Thyroid gland (tissue), 4 donors: ENCODE measurements at regions of chr19 and their contacts with region 1.

Region 1: DNA sequence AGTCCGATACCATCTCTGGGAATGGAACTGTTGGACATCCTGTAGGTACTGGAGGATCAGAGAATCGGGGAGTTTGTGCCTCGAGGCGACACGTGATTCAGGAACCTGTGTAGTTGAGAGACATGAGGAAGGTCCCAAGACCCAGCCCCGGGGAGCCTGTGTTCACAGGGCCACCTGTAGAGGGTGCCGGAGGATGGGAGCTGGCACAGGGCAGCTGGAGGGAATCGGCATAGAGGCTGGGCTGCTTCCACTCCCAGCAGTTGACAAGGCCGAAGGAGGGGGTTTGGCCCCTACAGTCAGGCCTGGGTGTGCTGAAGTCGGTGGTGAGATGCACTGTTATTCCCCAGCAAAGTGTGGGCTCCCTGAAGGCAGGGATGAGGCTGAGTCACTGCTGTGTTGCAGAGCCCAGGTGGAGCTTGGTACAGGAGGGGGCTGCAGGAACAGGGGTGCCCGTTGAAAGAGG is 2.5 kb upstream of the ISYNA1 start:
- DNase-seq: peak in 1 of 2 donors; percentile 11
- H3K4me3 ChIP-seq: no peak overlapping the region
- H3K27ac ChIP-seq: no peak overlapping the region
- H3K4me1 ChIP-seq: peaks cover 14 to 16% of the 10 kb centered on the region in 2 donors
- H3K27me3 ChIP-seq: no peaks in the 10 kb centered on the region
- CTCF ChIP-seq: peak in 1 of 6 experiments; percentile 8
- POLR2A ChIP-seq: no peak

Region 2: GRCh38 chr19:18167975-18168645 is 272.3 kb before region 1 on chr19:
- intact Hi-C with region 1: no loop called
- DNase-seq: peak; percentile 36 to 37
- H3K4me3 ChIP-seq: no peak overlapping the region
- H3K27ac ChIP-seq: no peak overlapping the region
- H3K4me1 ChIP-seq: peaks cover 0 to 1% of the 10 kb centered on the region in 2 donors
- H3K27me3 ChIP-seq: no peaks in the 10 kb centered on the region
- CTCF ChIP-seq: peak in 5 of 6 experiments; percentile 19 to 69 (median 52)
- POLR2A ChIP-seq: no peak

Region 3: DNA sequence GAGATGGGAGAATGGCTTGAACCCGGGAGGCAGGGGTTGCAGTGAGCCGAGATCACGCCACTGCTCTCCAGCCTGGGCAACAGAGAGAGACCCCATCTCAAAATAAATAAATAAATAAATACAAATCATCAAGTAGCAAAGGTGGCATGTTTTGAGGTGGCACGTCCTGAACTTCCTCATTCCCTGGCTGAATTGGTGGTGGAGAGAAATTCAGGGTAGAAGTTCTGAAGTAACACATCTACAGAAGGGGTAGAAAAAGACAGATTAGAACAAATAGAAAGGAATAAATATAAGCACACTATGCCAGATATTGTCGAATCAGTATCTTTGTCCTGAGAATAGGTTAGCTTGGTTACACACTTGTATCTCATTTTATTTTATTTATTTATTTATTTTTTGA is 260.5 kb before region 1 on chr19:
- intact Hi-C with region 1: no loop called
- DNase-seq: no peak
- H3K4me3 ChIP-seq: no peak overlapping the region
- H3K27ac ChIP-seq: no peak overlapping the region
- H3K4me1 ChIP-seq: no peaks in the 10 kb centered on the region
- H3K27me3 ChIP-seq: no peaks in the 10 kb centered on the region
- CTCF ChIP-seq: no peak
- POLR2A ChIP-seq: no peak

Region 4: DNA sequence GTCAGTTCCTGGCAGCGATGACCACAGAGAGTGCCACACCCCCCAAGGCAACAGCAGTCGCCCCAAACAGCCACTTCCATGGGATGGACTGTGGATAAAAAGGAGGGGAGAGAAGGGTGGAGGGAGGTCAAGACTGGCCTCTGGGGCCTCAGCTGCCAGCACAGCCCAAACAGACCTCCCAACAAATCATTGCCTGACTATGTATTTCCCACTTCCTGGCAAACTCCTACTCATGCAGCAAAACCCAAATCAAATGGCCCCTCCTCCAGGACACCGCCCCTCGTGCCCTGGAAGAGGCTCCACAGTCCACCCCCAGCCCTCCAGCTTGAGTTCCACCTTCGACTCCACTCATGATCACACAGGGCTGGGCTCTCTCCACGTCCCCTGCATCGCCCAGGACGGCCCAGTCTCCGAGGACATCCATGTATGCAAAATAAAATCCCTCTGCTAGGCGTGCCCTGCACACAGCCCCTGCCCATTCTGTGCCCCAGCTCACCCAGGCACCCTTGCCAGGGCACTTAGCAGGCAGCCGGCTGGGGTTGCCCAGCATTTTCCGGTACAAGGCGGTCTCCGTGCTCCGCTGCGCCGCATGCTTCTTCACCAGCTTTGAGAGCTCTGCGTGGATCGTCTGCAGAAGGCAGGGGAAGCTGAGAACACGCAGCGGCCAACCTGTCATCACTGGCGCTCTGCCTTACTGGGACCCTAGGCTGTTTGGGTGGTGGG is 91.9 kb after region 1 on chr19:
- intact Hi-C with region 1: no loop called
- DNase-seq: no peak
- H3K4me3 ChIP-seq: no peak overlapping the region
- H3K27ac ChIP-seq: no peak overlapping the region
- H3K4me1 ChIP-seq: no peaks in the 10 kb centered on the region
- H3K27me3 ChIP-seq: no peaks in the 10 kb centered on the region
- CTCF ChIP-seq: no peak
- POLR2A ChIP-seq: no peak

Region 5: GRCh38 chr19:18588611-18589379 is 148.3 kb after region 1 on chr19 and contains the start of gene REX1BD:
- intact Hi-C with region 1: loop called (anchors 10 kb)
- DNase-seq: peak; percentile 71 to 77
- H3K4me3 ChIP-seq: peak within 1 kb of the TSS; percentile 49 to 86 (median 84)
- H3K27ac ChIP-seq: peak within 1 kb of the TSS; percentile 64 to 86 (median 79)
- H3K4me1 ChIP-seq: peaks cover 9 to 16% of the 10 kb centered on the region in 2 donors
- H3K27me3 ChIP-seq: no peaks in the 10 kb centered on the region
- CTCF ChIP-seq: peak; percentile 65 to 86 (median 76)
- POLR2A ChIP-seq: peak in 1 of 2 donors; percentile 56
- total RNA-seq, gene REX1BD: 57.4 to 137 (median 101) TPM

Region 6: GRCh38 chr19:18675779-18676178 is 235.3 kb after region 1 on chr19:
- intact Hi-C with region 1: loop called (anchors 10 kb)
- DNase-seq: no peak
- H3K4me3 ChIP-seq: no peak overlapping the region
- H3K27ac ChIP-seq: no peak overlapping the region
- H3K4me1 ChIP-seq: peaks cover 15 to 39% of the 10 kb centered on the region in 2 donors
- H3K27me3 ChIP-seq: no peaks in the 10 kb centered on the region
- CTCF ChIP-seq: peak in 3 of 6 experiments; percentile 9 to 29 (median 10)
- POLR2A ChIP-seq: no peak